ENCODE measurements at regions of chr5 and their contacts with region 1.

Region 1: GRCh38 chr5:179023528-179024430 is at the start of gene ZNF879:
- DNase-seq: peak; percentile 89
- H3K4me3 Mint-ChIP-seq: peak within 1 kb of the TSS; percentile 95
- H3K27ac Mint-ChIP-seq: peak within 1 kb of the TSS; percentile 78
- H3K4me1 Mint-ChIP-seq: peaks cover 10% of the 10 kb centered on the region
- H3K27me3 Mint-ChIP-seq: no peaks in the 10 kb centered on the region
- total RNA-seq, gene ZNF879: 2.2 and 4.2 TPM in 2 replicates

Region 2: GRCh38 chr5:178153573-178154343 is 870.0 kb before region 1 on chr5 and contains the start of gene NHP2:
- intact Hi-C with region 1: loop called (anchors 5 kb)
- DNase-seq: peak; percentile 98
- H3K4me3 Mint-ChIP-seq: peak within 1 kb of the TSS; percentile 97
- H3K27ac Mint-ChIP-seq: peak within 1 kb of the TSS; percentile 86
- H3K4me1 Mint-ChIP-seq: peaks cover 54% of the 10 kb centered on the region
- H3K27me3 Mint-ChIP-seq: no peaks in the 10 kb centered on the region
- total RNA-seq, gene NHP2: 264 and 265 TPM in 2 replicates

Region 3: GRCh38 chr5:178232124-178232919 is 791.5 kb before region 1 on chr5 and contains the start of gene PHYKPL:
- intact Hi-C with region 1: loop called (anchors 5 kb)
- DNase-seq: peak; percentile 75
- H3K4me3 Mint-ChIP-seq: peak within 1 kb of the TSS; percentile 90
- H3K27ac Mint-ChIP-seq: peak within 1 kb of the TSS; percentile 86
- H3K4me1 Mint-ChIP-seq: peaks cover 66% of the 10 kb centered on the region
- H3K27me3 Mint-ChIP-seq: no peaks in the 10 kb centered on the region
- total RNA-seq, gene PHYKPL: 84.4 and 86.7 TPM in 2 replicates

Region 4: GRCh38 chr5:178732281-178732680 is 291.5 kb before region 1 on chr5:
- intact Hi-C with region 1: loop called (anchors 1 kb)
- DNase-seq: no peak
- H3K4me3 Mint-ChIP-seq: no peak overlapping the region
- H3K27ac Mint-ChIP-seq: no peak overlapping the region
- H3K4me1 Mint-ChIP-seq: peaks cover 6% of the 10 kb centered on the region
- H3K27me3 Mint-ChIP-seq: peaks cover 1% of the 10 kb centered on the region

Region 5: DNA sequence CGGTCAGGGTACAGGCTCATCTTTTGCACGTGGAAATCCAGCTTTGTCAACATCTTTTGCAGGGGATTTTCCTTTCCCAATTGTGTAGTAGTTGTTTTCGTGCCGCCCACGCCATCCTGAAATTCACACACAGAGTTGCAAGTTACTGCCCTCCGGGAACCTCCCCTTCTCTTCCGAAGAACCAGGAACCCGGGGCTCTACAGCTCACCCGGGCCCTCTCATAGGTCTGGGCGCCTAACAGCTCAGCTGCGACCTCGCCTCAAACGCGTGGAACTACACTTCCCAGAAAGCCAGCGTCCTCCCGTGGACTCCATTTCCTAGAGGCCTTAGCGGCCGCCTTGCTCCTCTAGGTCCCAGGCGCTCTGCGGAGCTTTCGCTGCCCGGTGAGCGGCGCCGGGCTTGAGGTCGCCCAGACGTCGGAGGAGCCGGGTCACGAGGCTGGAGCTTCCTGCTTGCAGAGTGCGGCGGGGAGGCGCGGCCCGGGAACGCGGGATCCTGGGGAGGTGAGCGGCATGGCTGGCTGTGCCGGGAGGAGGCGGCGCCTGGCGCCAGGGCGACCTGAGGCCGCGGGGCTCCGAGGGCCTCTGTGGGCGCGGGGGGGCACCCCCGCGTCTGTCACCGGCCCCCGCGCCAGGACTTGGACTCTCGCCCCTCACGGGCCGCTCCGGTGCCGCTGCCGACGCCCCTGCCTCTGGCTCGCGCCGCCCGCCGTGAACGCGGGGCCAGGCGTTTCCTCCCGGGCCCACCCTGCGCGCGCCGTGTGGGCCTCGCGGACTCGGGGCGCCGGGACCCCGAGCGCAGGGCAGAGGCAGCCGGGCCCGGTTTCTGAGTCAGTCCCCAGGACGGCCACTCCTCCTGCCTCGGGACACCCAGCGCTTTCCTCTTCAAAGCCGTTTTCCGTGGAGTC is 163.9 kb before region 1 on chr5 and contains the start of gene ZNF354B:
- intact Hi-C with region 1: loop called (anchors 1 kb)
- DNase-seq: peak; percentile 79
- H3K4me3 Mint-ChIP-seq: peak within 1 kb of the TSS; percentile 88
- H3K27ac Mint-ChIP-seq: peak within 1 kb of the TSS; percentile 75
- H3K4me1 Mint-ChIP-seq: peaks cover 25% of the 10 kb centered on the region
- H3K27me3 Mint-ChIP-seq: no peaks in the 10 kb centered on the region
- total RNA-seq, gene ZNF354B: 15.2 and 15.3 TPM in 2 replicates

Region 6: DNA sequence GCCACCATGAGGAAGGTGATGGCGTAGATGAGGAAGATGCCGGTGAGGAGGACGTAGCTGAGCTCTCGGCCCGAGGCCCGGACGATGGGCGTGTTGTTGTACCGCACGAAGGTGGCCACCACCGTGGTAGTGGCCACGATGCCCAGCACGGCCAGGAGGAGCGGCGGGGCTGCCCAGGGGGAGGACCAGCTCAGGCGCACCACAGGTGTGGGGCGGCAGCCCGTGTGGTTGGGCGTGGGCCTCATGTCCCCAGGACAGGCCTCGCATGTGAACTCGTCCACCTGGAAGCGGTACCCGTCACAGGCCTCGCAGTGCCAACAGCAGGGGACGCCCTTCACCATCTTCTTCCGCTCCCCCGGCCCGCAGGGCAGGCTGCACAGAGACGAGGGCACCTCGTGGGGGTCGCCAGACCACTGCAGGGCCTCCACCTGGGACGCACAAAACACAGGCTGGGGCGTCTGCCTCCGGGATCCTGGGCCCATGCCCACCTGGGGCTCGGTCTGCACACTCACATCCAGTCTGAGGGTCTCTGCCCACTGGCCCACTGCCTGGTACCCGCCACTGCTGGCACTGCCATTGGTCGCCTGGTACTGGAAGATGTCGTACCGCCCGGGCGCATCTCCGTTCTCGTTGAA is 37.3 kb before region 1 on chr5:
- intact Hi-C with region 1: no loop called
- DNase-seq: no peak
- H3K4me3 Mint-ChIP-seq: no peak overlapping the region
- H3K27ac Mint-ChIP-seq: no peak overlapping the region
- H3K4me1 Mint-ChIP-seq: no peaks in the 10 kb centered on the region
- H3K27me3 Mint-ChIP-seq: no peaks in the 10 kb centered on the region

Region 7: GRCh38 chr5:179044765-179045164 is 21.0 kb after region 1 on chr5:
- intact Hi-C with region 1: no loop called
- DNase-seq: no peak
- H3K4me3 Mint-ChIP-seq: no peak overlapping the region
- H3K27ac Mint-ChIP-seq: no peak overlapping the region
- H3K4me1 Mint-ChIP-seq: no peaks in the 10 kb centered on the region
- H3K27me3 Mint-ChIP-seq: no peaks in the 10 kb centered on the region

Region 8: DNA sequence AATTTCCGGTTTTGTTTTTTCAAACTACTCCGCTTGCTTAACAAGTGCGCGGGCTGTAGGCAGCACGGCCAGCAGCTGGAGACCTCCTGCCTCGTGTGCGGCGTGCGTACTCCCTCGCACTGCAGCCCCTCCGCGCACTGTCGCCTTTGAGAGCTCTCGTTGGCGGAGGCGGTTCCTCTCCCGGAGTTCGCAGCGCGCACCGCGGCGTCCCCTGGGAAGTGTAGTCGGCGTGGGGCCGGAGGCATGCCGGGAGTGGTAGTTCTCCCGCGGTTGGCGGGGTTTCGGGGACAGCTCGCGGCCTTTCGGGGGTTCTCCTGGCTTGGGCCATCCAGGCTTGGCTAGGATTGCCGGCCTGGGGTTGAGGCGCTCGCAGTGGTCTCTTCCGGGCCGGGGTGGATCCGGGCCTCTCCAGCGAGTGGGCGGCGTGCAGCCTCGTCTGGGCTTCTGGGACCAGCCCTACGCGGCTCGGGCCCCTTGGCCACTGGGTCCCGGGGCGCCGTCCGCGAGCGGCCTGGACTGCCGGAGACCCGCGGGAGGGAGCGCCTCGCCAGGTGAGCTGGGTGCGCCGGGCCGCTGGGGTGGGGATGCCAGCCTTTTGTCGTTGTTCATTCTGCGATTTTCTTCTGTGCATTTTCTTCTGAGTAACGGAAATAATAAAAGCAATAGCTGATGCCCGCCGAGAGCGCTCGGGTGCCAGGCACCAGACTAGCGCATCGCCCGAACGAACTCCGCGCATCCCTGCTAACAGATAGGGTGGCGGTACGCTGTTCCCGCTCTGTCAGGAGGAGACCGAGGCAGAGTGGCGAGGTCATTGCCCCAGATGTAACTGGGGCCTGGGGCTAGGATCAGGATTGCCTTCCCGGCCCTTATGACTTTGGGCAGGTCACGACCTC is 36.6 kb after region 1 on chr5 and contains the start of gene ZNF354C:
- intact Hi-C with region 1: loop called (anchors 1 kb)
- DNase-seq: peak; percentile 76
- H3K4me3 Mint-ChIP-seq: peak within 1 kb of the TSS; percentile 88
- H3K27ac Mint-ChIP-seq: peak within 1 kb of the TSS; percentile 61
- H3K4me1 Mint-ChIP-seq: no peaks in the 10 kb centered on the region
- H3K27me3 Mint-ChIP-seq: no peaks in the 10 kb centered on the region
- total RNA-seq, gene ZNF354C: 3.5 and 4.1 TPM in 2 replicates

Region 9: GRCh38 chr5:179387151-179388110 is 363.7 kb after region 1 on chr5:
- intact Hi-C with region 1: no loop called
- DNase-seq: no peak
- H3K4me3 Mint-ChIP-seq: no peak overlapping the region
- H3K27ac Mint-ChIP-seq: no peak overlapping the region
- H3K4me1 Mint-ChIP-seq: no peaks in the 10 kb centered on the region
- H3K27me3 Mint-ChIP-seq: no peaks in the 10 kb centered on the region

Region 10: DNA sequence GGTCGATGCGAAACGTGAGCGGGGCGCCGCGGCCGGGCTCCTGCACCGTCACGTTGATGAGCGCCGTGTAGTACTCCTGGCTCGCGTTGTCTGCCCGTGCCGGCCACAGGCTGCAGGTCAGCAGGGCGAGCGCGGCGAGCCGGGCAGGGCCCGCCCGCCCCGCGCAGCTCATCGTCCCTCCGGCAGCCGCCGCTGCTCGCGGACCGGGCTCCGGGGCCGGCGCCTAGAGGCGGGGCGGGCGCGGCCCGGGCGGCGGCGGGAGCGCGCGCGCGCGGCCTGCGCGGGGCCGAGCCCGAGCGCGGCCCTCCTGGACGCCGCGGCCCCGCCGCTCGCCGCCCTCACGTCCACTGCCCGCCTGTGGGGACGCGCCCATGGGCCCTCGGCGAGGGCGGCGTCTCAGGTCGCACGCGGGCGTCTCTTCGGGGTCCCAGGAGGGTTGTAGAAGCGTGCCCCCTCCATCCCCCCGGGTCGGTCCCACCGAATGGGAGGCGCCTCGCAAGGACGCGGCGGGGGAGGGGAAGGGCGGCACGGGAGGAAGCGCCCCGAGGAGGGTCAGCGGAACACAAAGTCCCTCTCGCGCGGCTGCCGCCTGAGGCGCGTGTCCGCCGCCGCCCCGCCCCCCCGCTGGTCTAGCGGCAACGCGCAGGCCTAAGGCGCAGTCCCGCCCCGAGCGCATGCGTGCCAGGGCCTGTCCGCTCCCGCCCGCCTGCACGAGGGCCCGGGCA is 1047.9 kb after region 1 on chr5 and contains the start of gene RNF130:
- intact Hi-C with region 1: loop called (anchors 5 kb)
- DNase-seq: peak; percentile 76
- H3K4me3 Mint-ChIP-seq: peak within 1 kb of the TSS; percentile 82
- H3K27ac Mint-ChIP-seq: peak within 1 kb of the TSS; percentile 50
- H3K4me1 Mint-ChIP-seq: peaks cover 5% of the 10 kb centered on the region
- H3K27me3 Mint-ChIP-seq: peaks cover 39% of the 10 kb centered on the region
- total RNA-seq, gene RNF130: 7.6 and 7.7 TPM in 2 replicates